A549 (cell line): ENCODE measurements at regions of chr10 and their contacts with region 1.

Region 1: DNA sequence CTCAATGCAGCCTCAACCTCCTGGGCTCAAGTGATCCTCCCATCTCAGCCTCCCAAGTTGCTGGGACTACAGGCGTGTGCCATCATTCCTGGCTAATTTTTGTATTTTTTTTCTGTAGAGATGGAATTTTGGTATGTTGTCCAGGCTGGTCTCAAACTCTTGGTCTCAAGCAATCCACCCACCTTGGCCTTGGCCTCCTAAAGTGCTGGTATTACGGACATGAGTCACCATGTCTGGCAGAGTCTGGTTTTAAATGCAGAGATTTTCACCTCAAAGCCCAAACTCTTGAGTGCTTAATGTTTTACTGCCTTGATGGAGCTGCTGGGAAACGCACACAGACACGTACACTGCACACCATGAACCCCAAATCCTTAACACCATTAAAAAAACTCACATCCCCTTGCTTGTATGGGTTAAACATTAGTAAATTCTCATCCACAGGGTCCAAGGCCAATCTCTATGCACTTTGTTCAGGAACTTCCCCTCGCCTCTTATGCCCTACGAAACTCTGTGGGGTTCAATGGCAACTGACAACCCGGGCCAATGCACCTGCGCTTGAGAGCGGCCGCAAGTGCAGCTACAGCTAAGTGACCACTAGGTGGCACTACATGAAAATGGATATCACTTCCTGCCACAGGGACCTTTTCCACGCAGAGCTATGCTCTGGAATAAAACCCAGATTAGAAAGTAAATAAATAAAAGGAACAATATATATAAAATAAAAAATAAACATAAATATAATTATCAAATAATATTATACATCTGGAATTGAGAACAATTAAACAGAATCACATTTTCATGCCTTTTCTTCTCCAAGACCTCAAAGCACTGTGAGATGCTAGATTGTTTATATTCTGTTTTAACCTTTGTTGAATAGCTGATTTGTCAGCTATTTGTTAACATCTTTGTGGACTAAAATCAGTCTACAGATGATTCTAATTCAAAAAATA is 66.9 kb upstream of the AFAP1L2 start:
- DNase-seq: peak; percentile 58 to 73
- ATAC-seq: peak; percentile 94 to 96
- H3K4me3 ChIP-seq: no peak overlapping the region
- H3K27ac ChIP-seq: no peak overlapping the region
- H3K4me1 ChIP-seq: no peaks in the 10 kb centered on the region
- CTCF ChIP-seq: peak; percentile 91
- EP300 ChIP-seq: no peak
- POLR2A ChIP-seq: no peak
- RAD21 ChIP-seq: peak; percentile 93 to 94

Region 2: GRCh38 chr10:113788604-113789083 is 682.6 kb before region 1 on chr10:
- CTCF ChIA-PET with region 1: no interaction called
- POLR2A ChIA-PET with region 1: no interaction called
- DNase-seq: peak; percentile 44 to 80
- ATAC-seq: peak; percentile 63 to 85
- H3K4me3 ChIP-seq: no peak overlapping the region
- H3K27ac ChIP-seq: peak overlapping the region; percentile 83 to 89
- H3K4me1 ChIP-seq: peaks cover 22% of the 10 kb centered on the region
- CTCF ChIP-seq: no peak
- EP300 ChIP-seq: peak in 1 of 2 experiments; percentile 35; a peak in 1 of 5 replicates
- POLR2A ChIP-seq: no peak
- RAD21 ChIP-seq: no peak

Region 3: GRCh38 chr10:114486938-114487814 is 15.9 kb after region 1 on chr10:
- CTCF ChIA-PET with region 1: interaction called, 40 read pairs
- POLR2A ChIA-PET with region 1: no interaction called
- DNase-seq: peak in 1 of 2 experiments; percentile 14
- ATAC-seq: peak; percentile 30 to 38; a peak in 2 of 6 replicates
- H3K4me3 ChIP-seq: no peak overlapping the region
- H3K27ac ChIP-seq: no peak overlapping the region
- H3K4me1 ChIP-seq: peaks cover 10% of the 10 kb centered on the region; the same call in 2 of the 3 replicates
- CTCF ChIP-seq: peak; percentile 33; the same call in 2 of the 3 replicates
- EP300 ChIP-seq: no peak
- POLR2A ChIP-seq: no peak
- RAD21 ChIP-seq: 0 out of 5 replicates have a peak, but pooled peaks of 1 of the 2 experiments have one; percentile 16

Region 4: DNA sequence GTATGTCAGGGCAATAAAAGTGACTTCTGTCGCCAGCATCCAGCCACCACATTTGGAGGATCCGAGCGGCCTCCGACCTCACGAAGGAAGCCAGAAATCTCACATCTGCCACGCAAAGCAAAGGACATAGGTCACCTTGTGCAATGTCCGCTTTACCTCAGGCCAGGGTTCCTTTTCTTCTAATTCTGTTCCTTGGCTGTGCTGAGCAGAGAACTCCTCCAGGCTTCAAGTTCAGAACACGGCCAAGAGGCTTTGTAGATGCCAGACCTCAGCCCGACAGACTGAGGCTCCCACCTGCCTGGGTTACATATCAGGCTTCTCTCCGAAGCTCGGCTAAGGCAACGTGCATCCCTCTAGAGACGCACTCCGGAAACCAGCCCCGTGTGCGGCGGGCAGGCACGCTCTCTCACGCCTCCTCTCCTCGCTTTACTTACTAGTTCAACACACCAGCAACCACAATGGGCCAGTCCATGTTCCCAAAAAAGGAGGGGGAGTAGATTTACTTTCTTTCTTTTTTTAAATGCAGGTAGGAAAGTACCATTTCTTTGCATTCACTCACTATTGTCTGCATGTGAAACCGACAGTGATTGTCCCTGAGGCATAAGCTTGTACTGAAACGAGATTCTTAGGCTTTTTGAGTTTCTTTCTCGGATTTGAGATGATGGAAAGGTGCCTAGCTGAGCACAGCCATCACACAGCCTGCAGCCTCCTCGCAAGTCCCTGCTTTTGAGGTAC is 55.4 kb after region 1 on chr10:
- CTCF ChIA-PET with region 1: interaction called, 33 read pairs
- POLR2A ChIA-PET with region 1: interaction called, 6 read pairs
- DNase-seq: peak; percentile 91 to 96
- ATAC-seq: peak; percentile 99
- H3K4me3 ChIP-seq: peak overlapping the region; percentile 48
- H3K27ac ChIP-seq: peak overlapping the region; percentile 83 to 87
- H3K4me1 ChIP-seq: peaks cover 39% of the 10 kb centered on the region
- CTCF ChIP-seq: no peak
- EP300 ChIP-seq: no peak
- POLR2A ChIP-seq: peak; percentile 80
- RAD21 ChIP-seq: 0 out of 5 replicates have a peak, but pooled peaks of 1 of the 2 experiments have one; percentile 13

Region 5: DNA sequence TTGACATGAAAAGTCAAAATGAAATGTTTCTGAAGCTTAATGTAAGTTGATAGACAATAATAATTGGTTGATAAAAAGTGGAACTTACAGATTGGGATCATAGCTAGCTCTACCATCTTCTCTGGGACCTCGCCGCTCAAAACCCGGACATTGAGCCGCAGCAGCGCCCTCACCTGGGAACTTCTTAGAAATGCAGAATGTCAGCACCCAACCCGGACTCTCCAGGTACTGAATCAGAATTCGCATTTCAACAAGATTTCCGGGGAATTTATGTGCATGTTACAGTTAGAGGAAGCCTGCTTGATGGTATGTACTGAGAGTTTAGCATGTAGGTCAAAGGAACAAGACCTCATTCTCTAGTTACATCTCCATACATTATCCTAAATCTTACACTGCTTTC is 223.5 kb after region 1 on chr10:
- CTCF ChIA-PET with region 1: interaction called, 14 read pairs
- POLR2A ChIA-PET with region 1: no interaction called
- DNase-seq: peak; percentile 57 to 73
- ATAC-seq: peak; percentile 79 to 89
- H3K4me3 ChIP-seq: no peak overlapping the region
- H3K27ac ChIP-seq: peak overlapping the region in 1 of 2 experiments; percentile 8; a peak in 1 of 6 replicates
- H3K4me1 ChIP-seq: peaks cover 46% of the 10 kb centered on the region
- CTCF ChIP-seq: peak; percentile 74
- EP300 ChIP-seq: no peak
- POLR2A ChIP-seq: no peak
- RAD21 ChIP-seq: peak; percentile 84

Region 6: GRCh38 chr10:114821293-114821914 is 350.2 kb after region 1 on chr10 and contains the start of gene FHIP2A:
- CTCF ChIA-PET with region 1: interaction called, 10 read pairs
- POLR2A ChIA-PET with region 1: no interaction called
- DNase-seq: peak; percentile 61 to 75
- ATAC-seq: peak; percentile 89
- H3K4me3 ChIP-seq: peak within 1 kb of the TSS; percentile 70
- H3K27ac ChIP-seq: peak within 1 kb of the TSS; percentile 88 to 100
- H3K4me1 ChIP-seq: peaks cover 36% of the 10 kb centered on the region
- CTCF ChIP-seq: peak; percentile 95
- EP300 ChIP-seq: no peak
- POLR2A ChIP-seq: 0 out of 2 replicates have a peak, but pooled peaks have one; percentile 19
- RAD21 ChIP-seq: peak; percentile 30 to 53; a peak in 3 of 5 replicates
- polyA plus RNA-seq, gene FHIP2A: 18.2 and 18.4 TPM in 2 replicates